ENCODE measurements at regions of chr10 and their contacts with region 1.

Region 1: GRCh38 chr10:96287392-96288105 is 16.2 kb upstream of the BLNK start:
- DNase-seq: peak; percentile 66
- H3K4me3 Mint-ChIP-seq: no peak overlapping the region
- H3K27ac Mint-ChIP-seq: peak overlapping the region; percentile 68
- H3K4me1 Mint-ChIP-seq: peaks cover 11% of the 10 kb centered on the region
- H3K27me3 Mint-ChIP-seq: no peaks in the 10 kb centered on the region
- CTCF ChIP-seq: no peak

Region 2: DNA sequence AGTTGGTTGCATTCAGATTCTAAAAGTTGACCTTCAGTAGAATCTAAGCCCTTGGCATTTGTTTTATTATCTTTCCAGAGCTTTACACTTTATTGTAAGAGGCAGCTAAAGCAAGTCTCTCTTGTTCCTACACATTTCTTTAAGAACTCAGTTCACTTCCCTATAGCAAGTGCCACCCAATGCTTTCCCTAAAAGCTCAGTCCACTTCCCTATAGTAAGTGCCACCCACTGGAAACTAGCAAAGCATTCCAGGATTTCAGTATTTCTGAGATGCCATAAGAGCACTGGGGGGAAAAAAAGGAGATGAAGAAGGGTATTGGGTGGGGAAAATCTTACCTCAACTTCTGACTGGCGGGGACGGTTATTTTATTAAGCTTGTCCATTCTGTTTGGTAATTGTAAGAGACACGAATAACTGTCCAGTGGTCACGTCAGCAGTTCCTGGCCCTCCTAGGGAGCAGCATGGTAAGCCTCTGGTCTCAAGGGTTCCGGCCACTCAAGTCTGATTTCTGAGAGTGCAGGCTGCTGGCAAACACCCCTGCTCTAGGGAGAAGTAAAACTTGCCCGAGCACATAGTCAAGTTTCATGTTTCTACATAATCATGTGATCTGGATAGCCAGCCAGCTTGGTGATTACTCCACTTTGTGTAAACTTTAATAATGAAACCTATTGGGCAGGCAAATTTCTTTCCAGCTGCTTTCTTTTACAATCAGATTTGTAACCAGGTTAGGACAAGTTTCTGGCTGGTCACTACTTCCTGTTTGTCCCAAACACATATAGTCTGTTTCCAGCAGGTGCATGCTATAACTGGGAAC is 16.3 kb before region 1 on chr10 and contains the start of gene BLNK:
- CTCF ChIA-PET with region 1: interaction called, 14 read pairs
- POLR2A ChIA-PET with region 1: interaction called, 28 read pairs
- intact Hi-C with region 1: no loop called
- DNase-seq: peak; percentile 79
- H3K4me3 Mint-ChIP-seq: peak within 1 kb of the TSS; percentile 74
- H3K27ac Mint-ChIP-seq: peak within 1 kb of the TSS; percentile 82
- H3K4me1 Mint-ChIP-seq: peaks cover 24% of the 10 kb centered on the region
- H3K27me3 Mint-ChIP-seq: no peaks in the 10 kb centered on the region
- CTCF ChIP-seq: no peak
- total RNA-seq, gene BLNK: 1.0 and 1.1 TPM in 2 replicates

Region 3: GRCh38 chr10:96366502-96366901 is 79.0 kb after region 1 on chr10:
- CTCF ChIA-PET with region 1: no interaction called
- POLR2A ChIA-PET with region 1: no interaction called
- intact Hi-C with region 1: no loop called
- DNase-seq: peak; percentile 71
- H3K4me3 Mint-ChIP-seq: no peak overlapping the region
- H3K27ac Mint-ChIP-seq: no peak overlapping the region
- H3K4me1 Mint-ChIP-seq: peaks cover 6% of the 10 kb centered on the region
- H3K27me3 Mint-ChIP-seq: no peaks in the 10 kb centered on the region
- CTCF ChIP-seq: no peak

Region 4: DNA sequence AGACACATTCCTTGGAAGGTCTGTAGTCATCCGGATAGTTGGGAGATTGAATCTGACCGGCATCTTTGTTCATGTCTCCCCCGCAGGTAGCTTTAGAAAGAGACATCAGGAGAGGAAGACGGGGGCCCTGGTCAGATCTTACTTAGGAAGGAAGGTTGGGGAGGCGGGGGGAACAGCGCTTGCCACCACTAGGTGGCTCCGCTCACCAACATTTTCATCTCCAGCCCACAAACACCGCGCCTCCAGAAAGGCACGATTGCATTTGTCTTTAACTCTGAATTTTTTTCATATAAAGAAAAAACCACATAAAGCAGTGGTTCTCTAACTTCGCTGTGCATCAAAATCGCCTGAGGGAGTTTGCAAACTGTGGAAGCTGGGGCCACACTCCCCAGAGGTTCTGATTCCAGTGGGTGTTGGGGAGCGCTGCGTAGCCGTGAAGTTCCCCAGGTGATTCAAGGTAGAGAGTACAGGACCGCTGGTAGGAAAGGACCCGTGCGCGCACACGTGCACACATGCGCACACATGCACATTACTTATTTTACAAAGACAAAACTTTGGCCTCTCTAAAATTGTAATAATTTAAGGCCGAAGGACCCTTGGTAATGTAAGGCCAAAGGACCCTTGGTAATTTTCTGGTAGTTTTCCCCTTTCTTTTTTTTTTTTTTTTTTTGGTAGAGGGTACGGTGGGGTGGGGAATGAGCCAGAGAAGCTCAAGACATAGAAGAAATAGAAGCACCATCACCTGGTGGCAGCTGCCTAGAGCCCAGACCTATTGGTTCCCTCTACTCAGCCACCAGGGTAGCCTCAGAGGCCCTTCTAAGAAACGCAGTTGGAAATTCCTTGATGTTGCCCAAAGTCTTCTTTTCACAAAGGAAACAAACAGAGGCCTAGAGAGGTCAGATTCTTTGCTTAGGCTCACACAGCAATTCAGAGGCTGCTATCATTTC is 108.7 kb after region 1 on chr10:
- CTCF ChIA-PET with region 1: no interaction called
- POLR2A ChIA-PET with region 1: no interaction called
- intact Hi-C with region 1: no loop called
- DNase-seq: peak; percentile 65
- H3K4me3 Mint-ChIP-seq: no peak overlapping the region
- H3K27ac Mint-ChIP-seq: no peak overlapping the region
- H3K4me1 Mint-ChIP-seq: no peaks in the 10 kb centered on the region
- H3K27me3 Mint-ChIP-seq: peaks cover 71% of the 10 kb centered on the region
- CTCF ChIP-seq: peak; percentile 76

Region 5: GRCh38 chr10:96448021-96448457 is 160.5 kb after region 1 on chr10:
- CTCF ChIA-PET with region 1: no interaction called
- POLR2A ChIA-PET with region 1: no interaction called
- intact Hi-C with region 1: no loop called
- DNase-seq: no peak
- H3K4me3 Mint-ChIP-seq: no peak overlapping the region
- H3K27ac Mint-ChIP-seq: no peak overlapping the region
- H3K4me1 Mint-ChIP-seq: no peaks in the 10 kb centered on the region
- H3K27me3 Mint-ChIP-seq: peaks cover 42% of the 10 kb centered on the region
- CTCF ChIP-seq: no peak

Region 6: DNA sequence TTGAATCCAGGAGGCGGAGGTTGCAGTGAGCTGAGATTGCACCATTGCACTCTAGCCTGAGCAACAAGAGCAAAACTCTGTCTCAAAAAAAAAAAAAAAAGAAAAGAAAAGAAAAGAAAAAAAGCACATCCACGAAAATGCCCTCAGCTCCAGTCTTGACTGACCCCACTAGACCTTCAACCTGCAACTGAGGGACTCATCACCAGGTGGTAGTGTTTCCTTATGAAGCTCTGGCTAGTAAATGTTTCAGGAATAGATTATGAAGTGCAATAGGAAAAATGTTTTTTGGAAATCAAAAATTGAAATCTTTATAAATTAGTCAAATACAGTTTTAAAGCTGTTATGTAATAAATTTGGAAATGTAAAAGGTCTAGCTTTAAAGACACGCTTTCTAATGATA is 203.8 kb after region 1 on chr10:
- CTCF ChIA-PET with region 1: no interaction called
- POLR2A ChIA-PET with region 1: no interaction called
- intact Hi-C with region 1: no loop called
- DNase-seq: peak; percentile 41
- H3K4me3 Mint-ChIP-seq: no peak overlapping the region
- H3K27ac Mint-ChIP-seq: no peak overlapping the region
- H3K4me1 Mint-ChIP-seq: no peaks in the 10 kb centered on the region
- H3K27me3 Mint-ChIP-seq: peaks cover 50% of the 10 kb centered on the region
- CTCF ChIP-seq: peak; percentile 11

Measured in MCF 10A (cell line).